GM10248 (cell line): ENCODE measurements at regions of chr9 and their contacts with region 1.

Region 1: DNA sequence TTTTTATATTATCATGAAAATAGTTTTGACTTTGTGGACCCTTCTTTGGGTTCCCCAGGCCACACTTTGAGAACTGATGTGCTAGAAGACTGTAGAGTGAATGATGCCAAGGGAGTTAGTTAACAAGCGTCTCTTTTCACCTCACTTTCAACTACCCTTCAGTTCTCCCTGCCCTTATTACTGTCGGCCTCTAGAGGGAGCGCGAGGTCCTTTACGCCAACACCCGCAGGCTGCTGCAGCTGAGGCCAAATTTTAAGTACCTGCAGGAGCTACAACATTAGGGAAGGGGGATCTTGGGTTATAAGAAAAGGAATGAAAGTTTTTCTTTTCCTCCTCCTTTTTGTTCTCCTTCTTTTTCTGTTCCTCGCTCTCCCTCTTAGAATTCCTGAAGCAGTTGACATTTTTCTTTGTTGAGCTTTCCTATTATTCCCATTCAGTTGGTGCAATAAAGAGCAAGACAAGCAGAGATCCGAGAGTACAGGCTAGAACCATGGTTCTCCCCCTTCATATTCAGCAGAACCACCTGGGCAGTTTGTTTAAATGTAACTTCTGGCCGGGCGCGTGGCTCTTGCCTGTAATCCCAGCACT is 84.0 kb downstream of the ZFAND5 start:
- DNase-seq: peak; percentile 79
- CTCF ChIP-seq: peak; percentile 91

Region 2: DNA sequence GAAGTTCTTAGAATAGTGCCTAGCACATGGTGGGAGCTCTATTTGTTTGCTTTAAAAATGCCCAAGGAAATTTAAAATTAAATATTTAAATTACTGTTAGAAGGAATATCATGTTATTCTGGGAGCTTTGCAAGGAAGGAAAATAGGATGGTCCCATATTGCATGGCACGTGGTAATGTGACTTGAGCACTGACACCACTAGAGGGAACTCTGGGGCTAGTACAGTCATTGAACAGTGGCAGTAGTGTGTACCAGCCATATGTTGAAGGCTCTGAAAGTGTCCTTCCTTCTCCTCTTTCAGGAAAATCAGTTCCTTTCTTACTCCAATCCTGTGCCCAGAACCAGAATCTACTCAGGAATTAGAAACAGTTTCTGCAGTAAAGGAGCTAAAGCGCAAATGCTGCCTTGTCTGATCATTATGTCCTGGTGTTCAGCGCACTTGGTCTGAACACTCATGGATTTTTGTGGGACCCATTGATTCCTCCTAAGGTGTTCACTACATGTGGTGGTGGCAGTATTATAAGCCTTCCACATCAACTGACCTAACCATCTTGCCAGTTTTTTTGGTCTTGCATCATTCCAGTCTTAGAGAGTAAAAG is 77.7 kb before region 1 on chr9:
- CTCF ChIA-PET with region 1: interaction called, 23 read pairs
- POLR2A ChIA-PET with region 1: no interaction called
- DNase-seq: peak; percentile 35
- CTCF ChIP-seq: peak; percentile 59

Region 3: DNA sequence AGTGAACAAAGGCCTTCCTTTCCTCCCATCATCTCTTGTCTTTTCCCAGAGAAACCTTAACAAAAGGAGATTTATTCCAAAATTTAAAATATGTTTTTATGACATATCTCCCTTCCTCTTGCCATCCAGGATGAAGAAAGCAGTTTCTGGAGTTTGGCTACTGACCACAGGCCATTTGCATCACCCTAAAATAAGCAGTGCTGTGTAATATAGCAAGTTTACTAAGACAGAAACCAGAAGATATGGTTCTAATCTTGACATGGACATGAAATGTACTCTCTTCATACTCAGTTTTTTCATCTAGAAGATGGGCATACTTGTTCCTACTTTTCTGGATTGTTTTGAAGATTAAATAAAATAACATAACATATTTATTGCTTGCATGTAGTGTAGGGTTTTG is 134.2 kb after region 1 on chr9:
- CTCF ChIA-PET with region 1: no interaction called
- POLR2A ChIA-PET with region 1: no interaction called
- DNase-seq: peak; percentile 24
- CTCF ChIP-seq: no peak

Region 4: DNA sequence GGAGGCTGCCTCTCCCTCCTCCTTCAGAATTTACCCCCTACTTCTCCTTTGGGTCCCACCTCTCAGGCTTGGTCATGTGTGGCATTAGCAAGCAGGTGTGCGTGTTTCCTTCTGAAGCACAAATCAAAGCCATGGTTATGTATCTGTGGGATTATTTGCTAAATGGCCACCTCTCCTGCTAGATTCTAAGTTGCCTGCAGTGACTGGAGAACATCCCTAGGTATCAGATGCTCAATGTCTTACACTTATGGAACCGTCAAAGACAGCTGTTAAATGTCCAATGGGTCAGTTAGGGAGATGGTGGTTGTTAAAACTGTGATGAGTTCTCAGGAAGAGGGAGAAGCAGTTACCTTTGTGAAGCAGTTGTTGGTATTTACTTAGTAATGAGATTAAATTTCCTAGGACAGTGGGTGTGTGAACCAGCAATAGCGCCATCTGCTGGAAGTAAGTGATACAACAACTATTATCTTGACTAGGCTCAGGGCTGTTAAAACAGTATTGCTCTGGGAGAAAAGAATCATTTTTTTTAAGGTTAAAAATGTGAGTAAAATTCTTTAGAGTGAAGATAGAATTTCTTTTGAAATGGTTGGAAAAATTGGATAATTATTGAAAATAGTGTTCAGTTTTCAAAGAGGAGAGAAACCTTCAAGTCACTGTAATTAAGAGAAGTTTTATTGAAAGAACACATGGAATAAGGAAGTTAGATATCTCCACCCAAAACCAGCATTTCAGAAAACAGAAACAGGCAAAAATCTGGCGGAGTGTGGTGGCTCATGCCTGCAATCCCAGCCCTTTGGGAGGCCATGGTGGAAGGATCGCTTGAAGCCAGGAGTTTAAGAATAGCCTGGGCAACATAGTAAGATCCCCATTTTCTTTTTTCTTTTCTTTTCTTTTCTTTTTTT is 311.7 kb after region 1 on chr9:
- CTCF ChIA-PET with region 1: interaction called, 129 read pairs
- POLR2A ChIA-PET with region 1: no interaction called
- DNase-seq: peak; percentile 50
- CTCF ChIP-seq: peak; percentile 65

Region 5: DNA sequence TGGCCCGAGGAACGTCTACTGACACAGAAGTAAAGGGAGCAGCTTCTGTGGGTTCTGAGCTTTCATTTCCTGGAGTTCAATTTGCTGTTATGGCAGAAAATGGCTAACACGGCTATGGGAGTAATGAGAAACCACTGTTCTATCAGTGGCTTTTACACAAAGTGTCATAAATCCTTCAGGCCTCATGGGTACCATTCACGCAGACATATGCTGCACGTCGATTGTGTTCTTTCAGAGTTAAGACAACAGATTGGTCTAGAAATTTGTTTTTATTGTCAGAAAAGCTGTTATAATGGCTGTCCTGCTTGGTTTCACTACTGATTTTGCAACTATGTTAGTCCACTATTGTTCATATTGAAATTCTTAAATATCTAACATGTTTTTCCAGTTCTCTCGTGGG is 536.4 kb after region 1 on chr9:
- CTCF ChIA-PET with region 1: interaction called, 111 read pairs
- POLR2A ChIA-PET with region 1: no interaction called
- DNase-seq: no peak
- CTCF ChIP-seq: no peak

Region 6: DNA sequence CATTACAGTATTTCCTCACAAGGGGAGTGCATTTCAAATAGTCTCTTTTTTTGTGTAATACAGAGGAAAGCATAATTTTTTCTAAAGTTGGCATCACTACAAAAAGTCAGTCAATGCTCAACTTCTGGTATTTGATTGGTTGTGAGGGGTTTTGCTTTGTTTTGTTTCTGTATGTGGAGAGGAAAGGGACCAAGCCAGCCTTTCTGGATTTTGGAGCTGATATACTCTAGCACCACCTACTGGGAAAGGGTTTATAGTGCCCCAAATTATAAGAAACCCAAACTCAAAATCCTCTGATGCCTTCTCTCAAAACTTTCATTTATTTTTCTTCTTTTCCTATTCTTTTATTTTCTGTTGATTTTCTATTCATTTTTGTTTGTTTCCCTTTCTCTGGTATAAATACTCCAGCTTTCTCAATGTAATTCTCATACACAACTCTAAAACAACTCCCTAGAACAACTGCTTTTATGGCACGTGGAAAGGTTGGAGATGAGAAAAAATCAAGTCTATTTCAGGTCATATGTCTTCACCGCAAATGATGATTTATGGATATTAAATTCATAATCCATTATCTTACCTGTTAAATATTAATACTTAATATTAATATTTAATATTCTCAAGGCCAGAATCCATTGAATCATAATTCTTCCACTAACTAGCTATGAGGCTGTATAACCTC is 801.1 kb after region 1 on chr9:
- CTCF ChIA-PET with region 1: interaction called, 11 read pairs
- POLR2A ChIA-PET with region 1: no interaction called
- DNase-seq: peak; percentile 36
- CTCF ChIP-seq: peak; percentile 76